Activated CD4-positive, alpha-beta T cell treated with anti-CD3 and anti-CD28 coated beads, Interleukin-2, amount 10 ng/mL, durations not matched to agents 7 days and 5 days (primary cell): ENCODE measurements at regions of chr12 and their contacts with region 1.

Region 1: DNA sequence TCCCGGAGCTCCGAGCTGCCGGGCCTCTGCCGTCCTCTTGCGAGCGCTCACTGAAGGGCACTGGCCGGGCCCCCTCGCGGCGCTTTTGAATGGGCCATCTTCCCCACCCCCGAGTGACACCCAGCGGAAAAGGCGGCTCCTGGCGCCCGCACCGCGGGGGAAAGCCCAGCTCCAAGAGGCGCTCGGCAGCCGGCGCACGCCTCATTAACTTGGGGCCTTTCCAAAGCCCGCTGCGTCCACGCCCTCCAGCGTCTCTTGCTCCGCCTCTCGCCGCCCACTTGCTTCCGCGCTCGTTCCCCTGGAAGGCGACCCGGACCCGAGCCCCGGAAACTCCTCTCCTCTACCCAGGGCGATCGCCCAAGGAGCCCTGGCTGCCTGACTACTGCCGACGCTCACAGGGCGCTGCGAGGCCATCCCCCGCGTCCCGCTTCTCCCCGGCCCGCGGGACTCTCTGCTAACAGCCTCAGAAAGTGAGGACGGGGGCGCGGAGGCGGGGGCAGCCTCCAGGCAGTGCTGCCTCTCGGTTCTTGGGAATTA is at the start of gene PHLDA1:
- DNase-seq: peak; percentile 86
- H3K4me3 Mint-ChIP-seq: peak within 1 kb of the TSS; percentile 85
- H3K27ac Mint-ChIP-seq: peak within 1 kb of the TSS; percentile 91
- H3K4me1 Mint-ChIP-seq: peaks cover 32% of the 10 kb centered on the region
- H3K27me3 Mint-ChIP-seq: peaks cover 23% of the 10 kb centered on the region
- total RNA-seq, gene PHLDA1: 3.8 to 3.9 TPM

Region 2: GRCh38 chr12:75814851-75815754 is 216.5 kb before region 1 on chr12:
- CTCF ChIA-PET with region 1: interaction called, 13 read pairs
- POLR2A ChIA-PET with region 1: no interaction called
- DNase-seq: no peak
- H3K4me3 Mint-ChIP-seq: no peak overlapping the region
- H3K27ac Mint-ChIP-seq: no peak overlapping the region
- H3K4me1 Mint-ChIP-seq: peaks cover 8% of the 10 kb centered on the region
- H3K27me3 Mint-ChIP-seq: peaks cover 2% of the 10 kb centered on the region

Region 3: GRCh38 chr12:75996861-75997447 is 34.7 kb before region 1 on chr12:
- CTCF ChIA-PET with region 1: no interaction called
- POLR2A ChIA-PET with region 1: no interaction called
- DNase-seq: no peak
- H3K4me3 Mint-ChIP-seq: no peak overlapping the region
- H3K27ac Mint-ChIP-seq: no peak overlapping the region
- H3K4me1 Mint-ChIP-seq: peaks cover 9% of the 10 kb centered on the region
- H3K27me3 Mint-ChIP-seq: no peaks in the 10 kb centered on the region

Region 4: GRCh38 chr12:76020731-76021672 is 10.6 kb before region 1 on chr12:
- CTCF ChIA-PET with region 1: interaction called, 22 read pairs
- POLR2A ChIA-PET with region 1: interaction called, 13 read pairs
- DNase-seq: peak; percentile 73
- H3K4me3 Mint-ChIP-seq: peak overlapping the region; percentile 42
- H3K27ac Mint-ChIP-seq: peak overlapping the region; percentile 98
- H3K4me1 Mint-ChIP-seq: peaks cover 38% of the 10 kb centered on the region
- H3K27me3 Mint-ChIP-seq: no peaks in the 10 kb centered on the region

Region 5: GRCh38 chr12:76152161-76152807 is 120.7 kb after region 1 on chr12:
- CTCF ChIA-PET with region 1: no interaction called
- POLR2A ChIA-PET with region 1: no interaction called
- DNase-seq: no peak
- H3K4me3 Mint-ChIP-seq: no peak overlapping the region
- H3K27ac Mint-ChIP-seq: no peak overlapping the region
- H3K4me1 Mint-ChIP-seq: peaks cover 4% of the 10 kb centered on the region
- H3K27me3 Mint-ChIP-seq: no peaks in the 10 kb centered on the region

Region 6: GRCh38 chr12:76398106-76398505 is 366.5 kb after region 1 on chr12:
- CTCF ChIA-PET with region 1: no interaction called
- POLR2A ChIA-PET with region 1: no interaction called
- DNase-seq: no peak
- H3K4me3 Mint-ChIP-seq: no peak overlapping the region
- H3K27ac Mint-ChIP-seq: no peak overlapping the region
- H3K4me1 Mint-ChIP-seq: no peaks in the 10 kb centered on the region
- H3K27me3 Mint-ChIP-seq: no peaks in the 10 kb centered on the region